ENCODE measurements at regions of chr2 and their contacts with region 1.

Region 1: DNA sequence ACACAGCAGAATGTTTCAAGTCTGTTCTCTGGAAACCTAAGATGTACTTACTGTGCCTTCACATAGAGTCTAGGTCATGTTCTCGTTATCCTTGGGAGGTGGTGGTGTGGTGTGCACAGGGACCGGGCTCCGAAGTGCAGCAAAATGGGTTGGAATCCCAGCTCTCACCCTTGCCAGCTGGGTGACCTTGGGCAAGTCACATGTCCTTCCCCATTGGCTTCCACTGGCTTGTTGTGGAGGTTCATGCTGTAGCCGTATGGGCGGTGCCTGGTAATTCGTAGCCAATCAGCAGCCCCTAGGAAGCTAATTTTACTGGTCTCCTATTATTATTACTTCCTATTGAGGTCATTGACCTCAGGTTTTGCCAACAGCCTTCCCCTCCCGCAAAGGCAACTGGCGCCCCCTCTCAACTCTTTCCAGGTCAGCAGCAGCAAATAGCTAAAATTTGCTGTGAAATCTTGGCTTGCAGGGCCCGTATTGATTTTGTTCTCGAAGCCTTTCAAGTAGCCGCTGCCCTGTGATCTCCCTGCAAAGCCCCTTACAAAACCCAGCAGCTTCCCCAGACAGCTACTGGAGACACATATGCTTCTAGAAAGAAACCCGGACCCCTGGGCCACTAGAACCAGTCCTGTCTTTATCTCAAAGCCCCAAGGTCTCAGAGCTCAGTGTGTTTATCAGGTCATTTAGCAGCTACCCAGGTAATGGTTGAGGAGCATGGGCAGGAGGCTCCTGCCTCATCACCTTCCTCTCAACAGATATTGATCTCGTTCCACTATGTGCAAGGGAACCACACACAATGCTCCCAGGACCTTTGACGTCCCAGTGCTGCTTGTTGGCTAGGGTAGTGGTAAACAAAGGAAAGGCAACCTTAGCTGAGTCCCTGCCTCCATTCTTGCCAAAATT is 66.5 kb upstream of the SLC1A4 start:
- DNase-seq: no peak
- H3K4me3 ChIP-seq: no peak overlapping the region
- H3K27ac ChIP-seq: no peak overlapping the region
- H3K4me1 ChIP-seq: peaks cover 4% of the 10 kb centered on the region
- H3K27me3 ChIP-seq: no peaks in the 10 kb centered on the region
- CTCF ChIP-seq: no peak

Region 2: DNA sequence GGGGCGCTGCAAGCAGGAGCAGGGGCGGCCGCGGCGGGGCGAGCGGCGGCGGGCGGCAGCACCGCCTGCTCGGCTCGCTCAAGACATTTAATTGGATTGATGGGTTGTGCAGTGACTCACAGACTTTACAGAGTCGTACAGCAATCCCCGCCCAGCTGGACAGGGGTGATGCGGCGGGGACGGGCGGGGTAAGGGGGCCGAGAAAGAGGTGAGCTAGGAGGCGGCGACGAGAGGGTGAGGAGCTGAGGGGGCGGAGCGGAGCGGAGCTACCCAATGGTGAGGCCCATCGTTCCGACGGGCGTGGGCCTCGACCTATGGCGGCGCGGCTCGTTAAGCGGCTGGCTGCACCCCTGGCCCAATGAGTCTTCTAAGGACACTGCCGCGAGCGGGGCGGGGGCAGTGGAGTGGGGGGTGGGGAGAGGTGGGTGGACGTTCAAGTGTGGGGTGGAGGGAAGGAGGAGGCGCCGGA is 171.9 kb before region 1 on chr2:
- intact Hi-C with region 1: no loop called
- DNase-seq: peak; percentile 100
- H3K4me3 ChIP-seq: peak overlapping the region; percentile 79
- H3K27ac ChIP-seq: peak overlapping the region; percentile 99
- H3K4me1 ChIP-seq: peaks cover 34% of the 10 kb centered on the region
- H3K27me3 ChIP-seq: no peaks in the 10 kb centered on the region
- CTCF ChIP-seq: peak; percentile 33

Region 3: DNA sequence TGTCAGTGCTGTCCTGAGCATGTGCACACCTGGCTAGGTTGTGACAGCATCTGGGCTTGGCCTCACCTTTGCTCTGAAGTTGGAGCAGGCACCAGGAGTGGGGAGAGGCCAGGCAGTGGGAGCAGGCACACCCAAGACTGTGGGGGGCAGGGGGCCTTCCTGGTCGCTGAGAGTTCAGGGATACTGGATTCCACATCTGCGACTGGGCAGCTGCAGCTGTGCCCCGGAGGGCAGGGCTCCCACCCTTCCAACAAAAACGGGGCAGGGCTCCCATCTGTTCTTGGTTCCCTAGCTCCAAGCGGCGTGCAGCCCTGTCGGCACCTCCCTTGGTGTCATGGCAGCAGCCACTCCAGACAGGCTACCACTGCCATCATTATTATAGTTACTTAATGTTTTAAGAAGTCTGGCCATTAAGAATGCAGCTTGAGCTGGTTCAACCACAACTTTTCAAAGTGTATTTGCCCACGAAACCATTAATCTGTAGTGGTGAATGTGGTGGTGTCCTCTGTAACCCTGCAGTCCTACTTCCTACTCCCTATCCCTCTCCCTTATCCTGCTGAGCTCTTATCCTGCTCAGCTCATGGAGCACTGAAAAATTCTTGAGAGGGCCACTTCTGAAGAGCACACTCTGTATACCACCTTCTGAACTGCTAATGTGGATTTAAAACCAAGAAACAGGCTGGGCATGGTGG is 255.2 kb after region 1 on chr2:
- intact Hi-C with region 1: loop called (anchors 10 kb)
- DNase-seq: no peak
- H3K4me3 ChIP-seq: no peak overlapping the region
- H3K27ac ChIP-seq: no peak overlapping the region
- H3K4me1 ChIP-seq: no peaks in the 10 kb centered on the region
- H3K27me3 ChIP-seq: peaks cover 6% of the 10 kb centered on the region
- CTCF ChIP-seq: no peak

Region 4: DNA sequence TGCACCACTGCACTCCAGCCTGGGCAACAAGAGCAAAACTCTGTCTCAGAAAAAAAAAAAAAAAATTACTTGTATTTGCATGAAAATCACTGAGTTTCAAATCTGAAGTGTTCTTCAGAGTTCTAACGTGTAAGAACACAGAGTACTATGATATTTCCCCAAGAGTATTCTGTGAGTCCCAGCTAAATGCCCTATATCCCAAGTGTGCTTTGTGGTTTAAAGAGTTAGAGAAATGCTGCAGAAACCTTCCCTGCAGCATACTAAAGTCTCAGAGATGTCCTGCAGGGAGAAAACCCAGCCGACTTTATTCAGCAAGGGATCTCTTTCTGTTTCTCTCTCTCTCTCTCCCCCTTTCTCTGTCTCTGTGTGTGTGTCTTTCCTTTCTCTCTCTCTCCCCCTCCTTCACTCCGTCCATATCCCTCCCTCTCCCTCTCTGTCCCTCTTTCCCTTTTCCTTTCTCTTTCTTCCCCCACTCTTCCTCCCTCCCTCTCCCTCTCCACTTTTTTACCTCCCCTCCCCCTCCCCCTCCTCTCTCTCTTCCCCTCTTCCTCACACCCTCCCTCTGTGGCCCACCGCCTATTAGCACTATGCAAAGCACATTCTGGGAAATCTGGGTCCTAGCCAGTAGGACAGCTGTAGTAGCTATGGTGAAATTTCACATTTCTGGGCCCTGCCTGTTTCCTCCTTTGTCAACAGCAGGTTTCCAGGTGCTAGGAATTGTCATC is 359.1 kb after region 1 on chr2:
- intact Hi-C with region 1: no loop called
- DNase-seq: peak; percentile 34
- H3K4me3 ChIP-seq: no peak overlapping the region
- H3K27ac ChIP-seq: peak overlapping the region; percentile 79
- H3K4me1 ChIP-seq: peaks cover 48% of the 10 kb centered on the region
- H3K27me3 ChIP-seq: peaks cover 52% of the 10 kb centered on the region
- CTCF ChIP-seq: no peak